ENCODE measurements at regions of chr6 and their contacts with region 1.

Region 1: GRCh38 chr6:125314019-125314581 is 12.3 kb upstream of the HDDC2 start:
- DNase-seq: peak in 6 of 9 experiments; percentile 17 to 66 (median 41)
- ATAC-seq: no peak
- H3K4me3 ChIP-seq: no peak overlapping the region
- H3K4me3 Mint-ChIP-seq: no peak overlapping the region
- H3K27ac ChIP-seq: no peak overlapping the region
- H3K27ac Mint-ChIP-seq: no peak overlapping the region
- H3K4me1 ChIP-seq: no peaks in the 10 kb centered on the region
- H3K4me1 Mint-ChIP-seq: peaks cover 2% of the 10 kb centered on the region
- H3K27me3 ChIP-seq: peaks cover 0 to 4% of the 10 kb centered on the region in 2 experiments
- H3K27me3 Mint-ChIP-seq: peaks cover 18% of the 10 kb centered on the region
- CTCF ChIP-seq: peak; percentile 44

Region 2: GRCh38 chr6:125301435-125302391 is 12.4 kb before region 1 on chr6 and contains the start of gene HDDC2:
- CTCF ChIA-PET with region 1: interaction called, 50 read pairs
- POLR2A ChIA-PET with region 1: no interaction called
- intact Hi-C with region 1: no loop called
- DNase-seq: peak in 8 of 9 experiments; percentile 27 to 67 (median 44)
- ATAC-seq: peak; percentile 43
- H3K4me3 ChIP-seq: peak within 1 kb of the TSS; percentile 65 to 70
- H3K4me3 Mint-ChIP-seq: peak within 1 kb of the TSS; percentile 82
- H3K27ac ChIP-seq: peak within 1 kb of the TSS; percentile 58 to 83
- H3K27ac Mint-ChIP-seq: peak within 1 kb of the TSS; percentile 88
- H3K4me1 ChIP-seq: peaks cover 39% of the 10 kb centered on the region
- H3K4me1 Mint-ChIP-seq: peaks cover 57% of the 10 kb centered on the region
- H3K27me3 ChIP-seq: no peaks in the 10 kb centered on the region
- H3K27me3 Mint-ChIP-seq: peaks cover 4% of the 10 kb centered on the region
- CTCF ChIP-seq: no peak
- total RNA-seq, gene HDDC2: 16.2 to 24.9 TPM

Region 3: GRCh38 chr6:125749173-125749864 is 435.2 kb after region 1 on chr6 and contains the start of gene HEY2:
- CTCF ChIA-PET with region 1: interaction called, 117 read pairs
- POLR2A ChIA-PET with region 1: interaction called, 4 read pairs
- intact Hi-C with region 1: loop called (anchors 1 kb)
- DNase-seq: peak; percentile 54 to 93 (median 77)
- ATAC-seq: peak; percentile 70
- H3K4me3 ChIP-seq: peak within 1 kb of the TSS; percentile 63 to 80
- H3K4me3 Mint-ChIP-seq: peak within 1 kb of the TSS; percentile 88
- H3K27ac ChIP-seq: peak within 1 kb of the TSS in 1 of 2 experiments; percentile 1
- H3K27ac Mint-ChIP-seq: peak within 1 kb of the TSS; percentile 72
- H3K4me1 ChIP-seq: peaks cover 30% of the 10 kb centered on the region
- H3K4me1 Mint-ChIP-seq: peaks cover 38% of the 10 kb centered on the region
- H3K27me3 ChIP-seq: peaks cover 12 to 14% of the 10 kb centered on the region in 2 experiments
- H3K27me3 Mint-ChIP-seq: peaks cover 57% of the 10 kb centered on the region
- CTCF ChIP-seq: no peak
- total RNA-seq, gene HEY2: 0.11 to 0.33 TPM

Region 4: DNA sequence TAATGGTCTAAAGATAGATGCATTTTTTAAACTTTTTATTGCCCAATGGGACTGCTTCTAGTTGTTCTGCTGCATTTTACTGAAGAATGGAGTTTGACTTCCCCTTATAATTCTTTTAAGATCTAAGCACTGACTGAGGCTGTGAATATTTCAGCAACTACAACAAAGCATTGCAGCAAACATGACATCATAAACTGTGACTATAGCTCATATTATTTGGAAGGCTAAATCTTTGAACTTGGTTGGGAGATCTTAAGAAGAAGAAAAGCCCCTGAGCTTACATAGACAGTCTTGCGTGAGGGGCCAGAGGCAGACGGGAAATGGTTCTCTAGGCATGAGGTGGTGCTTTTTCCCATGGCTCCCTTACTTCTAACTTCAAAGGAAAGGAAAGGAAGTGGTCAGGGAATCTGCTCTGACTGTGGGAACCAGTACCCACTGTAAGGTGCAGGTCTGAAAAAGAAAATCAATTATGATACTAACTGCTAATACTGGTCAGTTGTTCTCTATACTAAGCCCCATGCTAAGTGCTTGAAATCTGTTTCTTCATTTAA is 450.1 kb after region 1 on chr6:
- CTCF ChIA-PET with region 1: interaction called, 14 read pairs
- POLR2A ChIA-PET with region 1: no interaction called
- intact Hi-C with region 1: loop called (anchors 1 kb)
- DNase-seq: no peak
- ATAC-seq: no peak
- H3K4me3 ChIP-seq: no peak overlapping the region
- H3K4me3 Mint-ChIP-seq: no peak overlapping the region
- H3K27ac ChIP-seq: no peak overlapping the region
- H3K27ac Mint-ChIP-seq: no peak overlapping the region
- H3K4me1 ChIP-seq: no peaks in the 10 kb centered on the region
- H3K4me1 Mint-ChIP-seq: peaks cover 1% of the 10 kb centered on the region
- H3K27me3 ChIP-seq: peaks cover 0 to 4% of the 10 kb centered on the region in 2 experiments
- H3K27me3 Mint-ChIP-seq: peaks cover 39% of the 10 kb centered on the region
- CTCF ChIP-seq: no peak

Region 5: GRCh38 chr6:125769147-125769783 is 455.2 kb after region 1 on chr6:
- CTCF ChIA-PET with region 1: interaction called, 14 read pairs
- POLR2A ChIA-PET with region 1: no interaction called
- intact Hi-C with region 1: loop called (anchors 1 kb)
- DNase-seq: no peak
- ATAC-seq: no peak
- H3K4me3 ChIP-seq: no peak overlapping the region
- H3K4me3 Mint-ChIP-seq: no peak overlapping the region
- H3K27ac ChIP-seq: no peak overlapping the region
- H3K27ac Mint-ChIP-seq: no peak overlapping the region
- H3K4me1 ChIP-seq: no peaks in the 10 kb centered on the region
- H3K4me1 Mint-ChIP-seq: peaks cover 2% of the 10 kb centered on the region
- H3K27me3 ChIP-seq: no peaks in the 10 kb centered on the region
- H3K27me3 Mint-ChIP-seq: peaks cover 16% of the 10 kb centered on the region
- CTCF ChIP-seq: no peak

Region 6: GRCh38 chr6:125974214-125974866 is 660.2 kb after region 1 on chr6:
- CTCF ChIA-PET with region 1: interaction called, 10 read pairs
- POLR2A ChIA-PET with region 1: no interaction called
- intact Hi-C with region 1: loop called in 1 of 2 experiments (anchors 1 kb)
- DNase-seq: peak in 2 of 9 experiments; percentile 54 to 65
- ATAC-seq: peak; percentile 63
- H3K4me3 ChIP-seq: no peak overlapping the region
- H3K4me3 Mint-ChIP-seq: no peak overlapping the region
- H3K27ac ChIP-seq: no peak overlapping the region
- H3K27ac Mint-ChIP-seq: no peak overlapping the region
- H3K4me1 ChIP-seq: no peaks in the 10 kb centered on the region
- H3K4me1 Mint-ChIP-seq: peaks cover 13% of the 10 kb centered on the region
- H3K27me3 ChIP-seq: no peaks in the 10 kb centered on the region
- H3K27me3 Mint-ChIP-seq: no peaks in the 10 kb centered on the region
- CTCF ChIP-seq: peak; percentile 69

Region 7: DNA sequence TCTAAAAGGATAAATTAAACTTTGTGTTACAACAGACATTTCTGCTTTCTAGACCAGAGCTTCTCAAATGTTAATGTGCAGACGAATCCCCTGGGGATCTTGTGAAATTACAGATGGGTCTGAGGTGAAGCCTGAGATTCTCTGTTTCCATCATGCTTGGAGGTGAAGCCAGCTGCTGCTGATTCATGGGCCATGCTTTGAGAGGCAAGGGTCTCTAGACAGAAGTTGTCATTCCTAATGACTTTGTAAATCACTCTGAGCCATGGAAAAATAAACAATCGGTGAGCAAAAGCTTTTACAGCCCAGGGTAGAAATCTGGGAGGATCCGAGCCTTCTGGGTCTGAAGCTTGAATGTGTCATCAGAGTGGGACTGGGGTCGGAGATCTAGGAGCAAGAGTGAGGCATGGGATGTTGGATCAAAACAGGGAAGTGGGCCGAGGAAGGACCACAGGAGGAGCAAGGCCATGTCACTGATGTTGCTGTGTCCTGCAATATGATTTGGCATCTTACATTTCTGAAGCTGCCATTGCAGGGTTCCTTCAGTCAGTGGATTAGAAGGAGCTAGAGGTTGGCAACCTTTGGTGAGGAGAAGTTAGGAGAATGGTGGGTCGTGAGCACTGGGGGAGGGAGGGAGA is 749.5 kb after region 1 on chr6:
- CTCF ChIA-PET with region 1: no interaction called
- POLR2A ChIA-PET with region 1: no interaction called
- intact Hi-C with region 1: no loop called
- DNase-seq: no peak
- ATAC-seq: no peak
- H3K4me3 ChIP-seq: no peak overlapping the region
- H3K4me3 Mint-ChIP-seq: no peak overlapping the region
- H3K27ac ChIP-seq: no peak overlapping the region
- H3K27ac Mint-ChIP-seq: no peak overlapping the region
- H3K4me1 ChIP-seq: no peaks in the 10 kb centered on the region
- H3K4me1 Mint-ChIP-seq: no peaks in the 10 kb centered on the region
- H3K27me3 ChIP-seq: no peaks in the 10 kb centered on the region
- H3K27me3 Mint-ChIP-seq: no peaks in the 10 kb centered on the region
- CTCF ChIP-seq: no peak

Region 8: DNA sequence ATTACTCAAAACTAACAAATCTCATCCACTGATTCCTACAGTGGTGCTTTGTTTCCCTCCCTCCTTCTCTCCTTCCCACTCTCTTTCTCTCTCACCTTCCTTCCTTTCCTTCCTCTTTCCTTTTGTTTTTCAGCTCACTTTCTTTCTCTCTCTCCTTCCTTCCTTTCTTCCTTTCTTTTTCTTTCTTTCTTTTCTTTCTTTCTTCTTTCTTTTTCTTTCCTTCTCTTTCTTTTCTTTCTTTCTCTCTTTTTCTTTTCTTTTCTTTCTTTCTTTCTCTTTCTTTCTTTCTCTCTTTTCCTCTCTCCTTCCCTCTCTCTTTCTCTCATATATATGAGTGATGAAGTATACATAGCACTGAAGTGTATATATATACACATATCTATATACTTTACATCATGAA is 1267.2 kb after region 1 on chr6:
- CTCF ChIA-PET with region 1: no interaction called
- POLR2A ChIA-PET with region 1: no interaction called
- intact Hi-C with region 1: no loop called
- DNase-seq: no peak
- ATAC-seq: no peak
- H3K4me3 ChIP-seq: no peak overlapping the region
- H3K4me3 Mint-ChIP-seq: no peak overlapping the region
- H3K27ac ChIP-seq: no peak overlapping the region
- H3K27ac Mint-ChIP-seq: no peak overlapping the region
- H3K4me1 ChIP-seq: no peaks in the 10 kb centered on the region
- H3K4me1 Mint-ChIP-seq: no peaks in the 10 kb centered on the region
- H3K27me3 ChIP-seq: no peaks in the 10 kb centered on the region
- H3K27me3 Mint-ChIP-seq: no peaks in the 10 kb centered on the region
- CTCF ChIP-seq: peak; percentile 22

Region 9: GRCh38 chr6:127120787-127121636 is 1806.9 kb after region 1 on chr6:
- CTCF ChIA-PET with region 1: no interaction called
- POLR2A ChIA-PET with region 1: no interaction called
- intact Hi-C with region 1: loop called in 1 of 2 experiments (anchors 10 kb)
- DNase-seq: peak in 8 of 9 experiments; percentile 12 to 59 (median 45)
- ATAC-seq: peak; percentile 36
- H3K4me3 ChIP-seq: no peak overlapping the region
- H3K4me3 Mint-ChIP-seq: peak overlapping the region; percentile 54
- H3K27ac ChIP-seq: no peak overlapping the region
- H3K27ac Mint-ChIP-seq: no peak overlapping the region
- H3K4me1 ChIP-seq: peaks cover 16% of the 10 kb centered on the region
- H3K4me1 Mint-ChIP-seq: peaks cover 17% of the 10 kb centered on the region
- H3K27me3 ChIP-seq: peaks cover 6 to 15% of the 10 kb centered on the region in 2 experiments
- H3K27me3 Mint-ChIP-seq: peaks cover 46% of the 10 kb centered on the region
- CTCF ChIP-seq: peak; percentile 25

Measured in CD8-positive, alpha-beta T cell (primary cell).